K562 (cell line): ENCODE measurements at regions of chr17 and their contacts with region 1.

Region 1: DNA sequence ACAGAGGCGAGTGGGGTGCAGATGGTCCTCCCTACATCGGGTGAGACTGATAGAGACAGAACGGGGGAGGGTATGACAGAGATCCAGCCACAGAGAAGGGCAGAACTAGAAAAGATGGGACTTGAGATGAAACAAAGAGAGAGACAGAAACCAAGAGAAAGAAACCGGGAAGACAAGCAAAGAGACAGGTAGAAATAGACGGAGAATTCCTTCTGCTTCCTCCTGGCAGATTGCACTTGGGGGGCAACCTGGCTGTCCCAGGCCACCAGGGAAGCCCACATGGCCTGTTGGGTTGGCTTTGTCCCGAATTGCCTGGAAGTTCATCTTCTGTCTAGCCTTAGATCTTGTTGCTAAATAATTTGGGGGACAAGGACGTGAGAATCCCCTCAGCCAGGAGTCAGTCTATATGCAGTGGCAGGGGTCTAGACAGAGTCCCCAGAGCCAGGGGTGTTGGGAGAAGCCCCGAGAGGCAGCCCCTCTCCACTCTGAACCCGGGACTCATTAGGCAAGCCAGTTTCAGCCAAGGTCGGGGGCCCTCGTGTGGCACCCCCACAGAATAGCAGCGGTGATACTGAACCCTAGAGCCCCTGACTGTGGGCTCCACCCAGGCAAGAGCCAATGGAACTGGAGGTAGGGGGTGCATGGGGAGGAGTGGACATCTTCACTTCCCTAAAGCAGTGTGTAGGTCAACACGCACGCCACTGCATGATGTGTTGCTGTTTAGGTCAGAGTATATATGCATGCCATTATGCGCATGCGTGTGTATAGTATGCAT is 627 bp upstream of the TSPOAP1 start:
- DNase-seq: peak; percentile 59 to 95 (median 74)
- ATAC-seq: peak; percentile 67
- H3K4me3 ChIP-seq: peak overlapping the region; percentile 91
- H3K27ac ChIP-seq: peak overlapping the region; percentile 99
- H3K4me1 ChIP-seq: peaks cover 25 to 56% of the 10 kb centered on the region in 2 experiments
- H3K27me3 ChIP-seq: no peaks in the 10 kb centered on the region
- CTCF ChIP-seq: peak; percentile 67 to 82 (median 72)
- EP300 ChIP-seq: no peak
- POLR2A ChIP-seq: peak; percentile 76
- RAD21 ChIP-seq: peak; percentile 48 to 56

Region 2: DNA sequence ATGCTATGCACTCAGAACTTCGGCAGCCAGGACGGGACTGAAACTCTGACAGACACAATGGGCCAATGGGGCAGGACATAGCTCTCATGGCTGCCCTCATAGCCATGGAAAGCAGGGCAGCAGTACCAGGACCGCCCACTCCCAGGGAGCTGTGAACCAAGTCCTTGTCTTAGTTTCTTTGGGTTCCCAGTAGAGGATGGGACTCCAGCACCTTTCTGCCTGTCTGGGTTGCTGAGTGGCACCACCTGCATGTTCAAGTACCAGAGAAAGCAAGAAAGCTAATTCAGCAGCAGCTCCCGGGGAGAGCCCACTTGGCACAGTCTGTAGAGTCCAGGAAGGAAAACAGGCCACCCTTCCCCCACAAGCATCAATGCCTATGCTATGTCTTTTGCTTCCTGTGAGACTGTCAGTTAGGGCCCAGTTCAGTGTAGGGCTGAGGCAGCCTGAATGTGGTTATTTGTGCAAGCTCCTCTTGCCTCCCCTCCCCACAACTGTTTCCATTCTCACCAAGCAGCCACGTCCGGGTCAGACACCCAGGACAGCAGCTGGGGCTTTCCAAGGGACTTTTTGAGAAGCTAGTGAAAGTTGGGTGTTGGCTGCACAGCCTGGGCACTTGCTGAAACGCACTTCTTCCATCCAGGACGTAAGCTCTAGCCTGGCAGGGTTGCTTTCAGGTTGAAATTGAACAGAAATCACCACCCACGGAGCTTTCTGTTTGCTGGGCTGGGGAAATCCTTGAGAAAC is 15.0 kb after region 1 on chr17:
- CTCF ChIA-PET with region 1: no interaction called
- POLR2A ChIA-PET with region 1: interaction called, 22 read pairs
- in situ Hi-C with region 1: no loop called
- intact Hi-C with region 1: no loop called
- DNase-seq: no peak
- ATAC-seq: peak; percentile 6
- H3K4me3 ChIP-seq: no peak overlapping the region
- H3K27ac ChIP-seq: no peak overlapping the region
- H3K4me1 ChIP-seq: peaks cover 9 to 11% of the 10 kb centered on the region in 2 experiments; a peak in 4 of 5 replicates
- H3K27me3 ChIP-seq: no peaks in the 10 kb centered on the region
- CTCF ChIP-seq: no peak
- EP300 ChIP-seq: no peak
- POLR2A ChIP-seq: 0 out of 2 replicates have a peak, but pooled peaks have one; percentile 21
- RAD21 ChIP-seq: no peak

Region 3: GRCh38 chr17:58364270-58364942 is 35.2 kb after region 1 on chr17:
- CTCF ChIA-PET with region 1: no interaction called
- POLR2A ChIA-PET with region 1: interaction called, 23 read pairs
- in situ Hi-C with region 1: no loop called
- intact Hi-C with region 1: loop called (anchors 1 kb)
- DNase-seq: peak; percentile 87 to 90 (median 88)
- ATAC-seq: peak; percentile 92
- H3K4me3 ChIP-seq: no peak overlapping the region
- H3K27ac ChIP-seq: peak overlapping the region; percentile 63
- H3K4me1 ChIP-seq: peaks cover 42 to 47% of the 10 kb centered on the region in 2 experiments
- H3K27me3 ChIP-seq: no peaks in the 10 kb centered on the region
- CTCF ChIP-seq: no peak
- EP300 ChIP-seq: peak; percentile 75; the same call in 1 of the 2 replicates
- POLR2A ChIP-seq: no peak; the same call in 1 of the 2 replicates
- RAD21 ChIP-seq: no peak

Region 4: GRCh38 chr17:58417300-58418092 is 88.3 kb after region 1 on chr17 and contains the start of gene RNF43:
- CTCF ChIA-PET with region 1: no interaction called
- POLR2A ChIA-PET with region 1: interaction called, 79 read pairs
- in situ Hi-C with region 1: no loop called
- intact Hi-C with region 1: loop called (anchors 1 kb)
- DNase-seq: peak; percentile 92 to 97 (median 94)
- ATAC-seq: peak; percentile 97
- H3K4me3 ChIP-seq: peak within 1 kb of the TSS; percentile 22
- H3K27ac ChIP-seq: peak within 1 kb of the TSS; percentile 37
- H3K4me1 ChIP-seq: peaks cover 3 to 8% of the 10 kb centered on the region in 2 experiments; a peak in 4 of 5 replicates
- H3K27me3 ChIP-seq: no peaks in the 10 kb centered on the region
- CTCF ChIP-seq: peak; percentile 90 to 93 (median 91)
- EP300 ChIP-seq: peak; percentile 50; the same call in 1 of the 2 replicates
- POLR2A ChIP-seq: peak; percentile 58
- RAD21 ChIP-seq: peak; percentile 93 to 96
- polyA plus RNA-seq, gene RNF43: 0.29 to 0.51 TPM

Region 5: GRCh38 chr17:58432806-58433572 is 103.8 kb after region 1 on chr17:
- CTCF ChIA-PET with region 1: no interaction called
- POLR2A ChIA-PET with region 1: interaction called, 24 read pairs
- in situ Hi-C with region 1: no loop called
- intact Hi-C with region 1: no loop called
- DNase-seq: no peak
- ATAC-seq: peak; percentile 36; the same call in 1 of the 3 replicates
- H3K4me3 ChIP-seq: no peak overlapping the region
- H3K27ac ChIP-seq: no peak overlapping the region
- H3K4me1 ChIP-seq: peaks cover 7 to 19% of the 10 kb centered on the region in 2 experiments; a peak in 4 of 5 replicates
- H3K27me3 ChIP-seq: no peaks in the 10 kb centered on the region
- CTCF ChIP-seq: peak in 2 of 3 experiments; percentile 10 to 30; a peak in 2 of 6 replicates
- EP300 ChIP-seq: no peak
- POLR2A ChIP-seq: no peak
- RAD21 ChIP-seq: no peak